ENCODE measurements at regions of chr4 and their contacts with region 1.

Region 1: DNA sequence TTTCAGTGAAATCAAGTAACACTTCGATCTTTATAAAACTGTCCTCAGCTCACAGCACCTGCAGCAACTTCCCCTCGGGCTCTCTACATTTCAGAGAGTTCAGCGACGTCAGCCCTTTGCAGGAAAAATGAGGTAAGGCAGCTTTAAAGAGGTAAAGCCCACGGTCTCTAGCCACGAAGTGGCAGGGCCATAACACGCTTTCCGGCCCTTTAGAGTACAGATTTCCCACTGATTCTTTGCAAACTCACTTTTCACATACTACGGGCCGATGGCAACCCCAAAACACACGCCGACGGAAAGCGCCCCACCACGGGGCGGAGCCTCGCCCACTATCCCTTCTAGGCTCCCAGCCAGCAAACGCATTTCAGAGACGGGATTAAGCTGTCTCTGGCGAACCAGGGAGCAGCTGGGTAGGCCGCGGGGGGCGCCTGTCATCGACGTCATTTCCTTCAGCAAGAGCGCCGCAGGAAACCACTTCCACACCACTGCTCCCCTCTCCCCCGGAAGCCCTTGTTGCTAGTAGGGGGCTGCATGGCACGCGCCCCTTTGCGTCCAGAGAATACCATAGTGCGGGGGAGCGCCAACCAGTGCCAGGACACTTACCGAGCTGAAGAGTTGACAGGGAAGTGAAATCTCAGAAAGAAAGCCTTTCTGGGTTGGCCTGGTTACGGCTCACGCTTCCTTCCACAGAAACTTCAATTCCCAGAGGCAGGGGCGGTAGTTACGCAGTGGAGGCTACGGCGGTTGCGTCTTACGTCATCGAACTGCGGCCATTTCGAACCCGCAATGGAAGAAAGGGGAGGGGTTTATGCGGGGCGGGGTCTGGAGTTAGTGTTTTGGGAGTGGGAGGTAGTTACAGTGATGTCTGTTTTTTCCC is at the start of gene TRMT10A:
- DNase-seq: peak; percentile 98
- H3K4me3 ChIP-seq: peak within 1 kb of the TSS; percentile 73
- H3K27ac ChIP-seq: peak within 1 kb of the TSS; percentile 96
- H3K4me1 ChIP-seq: peaks cover 20% of the 10 kb centered on the region
- H3K27me3 ChIP-seq: no peaks in the 10 kb centered on the region
- CTCF ChIP-seq: peak; percentile 39
- total RNA-seq, gene TRMT10A: 4.2 TPM

Region 2: GRCh38 chr4:99808260-99808857 is 244.8 kb after region 1 on chr4:
- intact Hi-C with region 1: loop called (anchors 2 kb)
- DNase-seq: peak; percentile 48
- H3K4me3 ChIP-seq: no peak overlapping the region
- H3K27ac ChIP-seq: no peak overlapping the region
- H3K4me1 ChIP-seq: peaks cover 21% of the 10 kb centered on the region
- H3K27me3 ChIP-seq: no peaks in the 10 kb centered on the region
- CTCF ChIP-seq: peak; percentile 76

Region 3: GRCh38 chr4:99949999-99950912 is 386.7 kb after region 1 on chr4 and contains the start of gene H2AZ1:
- intact Hi-C with region 1: loop called (anchors 10 kb)
- DNase-seq: peak; percentile 99
- H3K4me3 ChIP-seq: peak within 1 kb of the TSS; percentile 95
- H3K27ac ChIP-seq: peak within 1 kb of the TSS; percentile 96
- H3K4me1 ChIP-seq: peaks cover 59% of the 10 kb centered on the region
- H3K27me3 ChIP-seq: no peaks in the 10 kb centered on the region
- CTCF ChIP-seq: no peak
- total RNA-seq, gene H2AZ1: 60.7 TPM

Measured in left ventricle myocardium inferior (tissue), 1 donor.